Heart right ventricle (tissue), 16 donors: ENCODE measurements at regions of chr11 and their contacts with region 1.

Region 1: GRCh38 chr11:68206187-68206601 is 6.9 kb downstream of the KMT5B start:
- DNase-seq: no peak
- ATAC-seq: peak in 3 of 8 donors; percentile 32 to 57 (median 47)
- H3K4me3 ChIP-seq: no peak overlapping the region
- H3K27ac ChIP-seq: no peak overlapping the region
- H3K4me1 ChIP-seq: peaks cover 6 to 89% (median 72%) of the 10 kb centered on the region in 9 donors
- H3K27me3 ChIP-seq: no peaks in the 10 kb centered on the region
- CTCF ChIP-seq: peak; percentile 54 to 88 (median 78)

Region 2: DNA sequence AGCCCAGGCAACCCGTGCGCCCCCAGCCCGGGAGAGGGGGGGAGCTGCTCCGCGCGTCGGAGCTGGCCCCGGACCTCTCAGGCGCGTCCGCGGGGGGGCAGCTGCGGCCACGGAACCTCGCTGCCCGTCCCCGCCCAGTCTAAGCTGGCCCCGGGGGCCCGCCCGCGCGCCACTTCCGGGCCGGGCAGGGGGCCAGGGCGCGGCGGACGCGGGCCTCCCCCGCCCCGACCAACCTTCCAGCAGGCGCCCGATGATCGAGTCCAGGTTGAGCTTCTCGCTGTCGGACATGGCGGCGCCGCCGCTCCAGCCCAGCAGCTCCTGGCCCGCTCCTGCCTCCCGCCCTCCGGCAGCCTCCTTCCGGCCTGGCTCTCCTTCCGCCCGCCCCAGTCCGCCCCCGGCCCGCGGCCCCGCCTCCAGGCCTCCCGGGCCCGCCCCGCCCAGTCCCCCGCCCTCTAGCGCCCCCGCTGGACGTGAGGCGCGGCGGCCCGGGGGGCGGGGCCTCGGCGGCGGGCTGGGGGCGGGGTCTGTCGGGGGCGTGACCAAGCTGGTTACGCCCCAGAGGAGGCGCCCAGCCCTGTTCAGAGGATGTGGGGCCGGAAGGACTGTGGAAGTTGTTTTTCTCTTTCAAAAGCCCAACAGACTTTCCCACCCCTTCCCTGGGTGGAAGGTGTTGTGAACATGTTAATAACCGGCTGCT is 804.6 kb before region 1 on chr11 and contains the start of gene PPP1CA:
- intact Hi-C with region 1: no loop called
- DNase-seq: peak; percentile 90 to 94
- ATAC-seq: peak; percentile 76 to 95 (median 86)
- H3K4me3 ChIP-seq: peak within 1 kb of the TSS; percentile 68 to 99 (median 96)
- H3K27ac ChIP-seq: peak within 1 kb of the TSS; percentile 89 to 99 (median 97)
- H3K4me1 ChIP-seq: peaks cover 0 to 89% (median 54%) of the 10 kb centered on the region in 9 donors
- H3K27me3 ChIP-seq: no peaks in the 10 kb centered on the region
- CTCF ChIP-seq: peak; percentile 38 to 91 (median 62)
- total RNA-seq, gene PPP1CA: 92.0 to 143 (median 103) TPM

Region 3: DNA sequence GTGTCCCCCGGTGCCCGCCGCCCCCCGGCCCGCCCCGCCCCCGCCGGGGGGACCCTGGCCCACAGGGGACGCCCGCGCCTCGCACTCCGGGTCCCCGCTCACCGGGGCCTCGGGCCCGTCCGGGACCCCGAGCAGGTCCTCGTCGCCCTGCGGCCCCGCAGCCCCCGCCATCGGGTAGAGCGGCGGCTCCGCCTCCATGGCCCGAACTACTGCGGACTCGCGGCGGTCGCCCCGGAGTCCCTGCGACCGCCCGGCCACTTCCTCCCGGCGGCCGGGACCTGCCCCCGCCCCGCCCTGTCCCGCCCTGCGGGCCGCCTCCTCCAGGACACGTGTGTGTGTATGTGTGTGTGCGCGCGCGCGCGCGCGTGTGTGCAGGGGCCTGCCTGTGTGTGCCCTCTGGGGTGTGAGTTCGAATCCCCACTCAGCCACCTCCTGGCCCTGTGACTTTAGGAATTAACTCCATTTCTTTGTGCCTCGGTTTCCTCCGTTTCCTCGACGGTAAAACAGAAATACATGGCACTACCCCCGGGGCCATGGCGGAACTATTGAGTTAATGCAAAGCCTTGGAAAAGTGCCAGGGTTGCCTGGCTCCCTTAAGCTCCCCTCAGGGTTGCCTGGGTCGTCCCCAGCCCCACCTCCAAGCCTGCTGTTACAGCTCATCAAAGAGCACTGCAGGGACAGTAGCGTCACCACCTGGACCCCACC is 202.2 kb before region 1 on chr11 and contains the start of gene UNC93B1:
- intact Hi-C with region 1: loop called in 2 of 10 experiments (anchors 10 kb)
- DNase-seq: peak; percentile 90 to 93
- ATAC-seq: peak; percentile 86 to 95 (median 92)
- H3K4me3 ChIP-seq: peak within 1 kb of the TSS; percentile 56 to 82 (median 72)
- H3K27ac ChIP-seq: peak within 1 kb of the TSS in 9 of 10 donors; percentile 51 to 91 (median 79)
- H3K4me1 ChIP-seq: peaks cover 0 to 29% (median 14%) of the 10 kb centered on the region in 9 donors
- H3K27me3 ChIP-seq: no peaks in the 10 kb centered on the region
- CTCF ChIP-seq: no peak
- total RNA-seq, gene UNC93B1: 3.2 to 18.2 (median 6.2) TPM

Region 4: GRCh38 chr11:68010090-68011041 is 195.8 kb before region 1 on chr11 and contains the start of gene ALDH3B1:
- intact Hi-C with region 1: loop called in 3 of 10 experiments (anchors 10 kb)
- DNase-seq: peak; percentile 82 to 90
- ATAC-seq: peak; percentile 79 to 88 (median 85)
- H3K4me3 ChIP-seq: peak within 1 kb of the TSS in 9 of 10 donors; percentile 24 to 55 (median 39)
- H3K27ac ChIP-seq: peak within 1 kb of the TSS; percentile 69 to 95 (median 81)
- H3K4me1 ChIP-seq: peaks cover 10 to 66% (median 20%) of the 10 kb centered on the region in 9 donors
- H3K27me3 ChIP-seq: no peaks in the 10 kb centered on the region
- CTCF ChIP-seq: no peak
- total RNA-seq, gene ALDH3B1: 3.5 to 11.0 (median 4.3) TPM

Region 5: DNA sequence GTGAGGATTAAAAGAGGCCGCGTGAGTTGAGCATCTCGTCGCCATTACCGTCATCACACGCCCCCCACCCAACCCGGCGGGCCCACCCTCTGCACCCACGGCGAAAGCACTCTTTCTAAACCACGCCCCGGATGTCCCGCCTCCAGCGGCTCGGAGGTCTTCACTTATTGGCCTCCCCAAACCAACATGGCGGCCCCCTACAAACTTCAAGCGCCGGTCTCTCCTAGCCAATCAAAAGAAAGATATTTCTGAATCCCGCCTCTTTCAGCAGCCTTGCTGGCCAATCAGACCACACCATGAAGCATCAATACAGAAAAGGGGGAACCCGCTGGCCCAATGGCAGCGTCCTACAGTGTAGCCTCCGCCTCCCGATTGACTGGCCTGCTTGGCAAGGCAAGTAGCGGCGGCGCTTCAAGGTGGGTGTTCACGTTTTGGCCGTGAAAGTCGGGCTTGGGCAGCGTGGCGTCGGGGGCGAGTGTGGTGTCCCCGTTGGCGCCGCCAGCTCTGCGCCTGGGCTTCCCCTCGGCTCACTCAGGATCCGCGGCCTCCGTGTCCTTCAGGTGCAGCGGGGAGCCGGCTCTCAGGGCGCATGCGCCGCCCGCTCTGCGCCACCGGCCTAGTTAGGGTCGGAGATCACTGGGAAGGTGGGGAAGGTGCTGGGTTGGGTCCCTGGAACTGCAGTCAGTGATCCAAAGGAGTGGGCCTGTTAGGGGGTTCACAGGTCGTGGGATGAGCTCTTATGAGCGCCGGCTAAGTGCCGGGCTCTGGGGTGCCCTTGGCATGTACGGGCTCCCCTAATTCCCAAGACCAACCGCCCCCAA is 175.7 kb before region 1 on chr11 and contains the start of gene NDUFS8:
- intact Hi-C with region 1: loop called in 3 of 10 experiments (anchors 5 to 10 kb)
- DNase-seq: peak; percentile 96 to 97
- ATAC-seq: peak; percentile 86 to 97 (median 94)
- H3K4me3 ChIP-seq: peak within 1 kb of the TSS; percentile 54 to 96 (median 79)
- H3K27ac ChIP-seq: peak within 1 kb of the TSS; percentile 64 to 97 (median 92)
- H3K4me1 ChIP-seq: peaks cover 17 to 48% (median 34%) of the 10 kb centered on the region in 9 donors
- H3K27me3 ChIP-seq: no peaks in the 10 kb centered on the region
- CTCF ChIP-seq: no peak
- total RNA-seq, gene NDUFS8: 330 to 492 (median 421) TPM

Region 6: GRCh38 chr11:68051191-68052144 is 154.7 kb before region 1 on chr11:
- intact Hi-C with region 1: no loop called
- DNase-seq: no peak
- ATAC-seq: peak in 4 of 8 donors; percentile 12 to 39 (median 17)
- H3K4me3 ChIP-seq: no peak overlapping the region
- H3K27ac ChIP-seq: no peak overlapping the region
- H3K4me1 ChIP-seq: peaks cover 0 to 6% (median 0%) of the 10 kb centered on the region in 9 donors
- H3K27me3 ChIP-seq: no peaks in the 10 kb centered on the region
- CTCF ChIP-seq: no peak

Region 7: DNA sequence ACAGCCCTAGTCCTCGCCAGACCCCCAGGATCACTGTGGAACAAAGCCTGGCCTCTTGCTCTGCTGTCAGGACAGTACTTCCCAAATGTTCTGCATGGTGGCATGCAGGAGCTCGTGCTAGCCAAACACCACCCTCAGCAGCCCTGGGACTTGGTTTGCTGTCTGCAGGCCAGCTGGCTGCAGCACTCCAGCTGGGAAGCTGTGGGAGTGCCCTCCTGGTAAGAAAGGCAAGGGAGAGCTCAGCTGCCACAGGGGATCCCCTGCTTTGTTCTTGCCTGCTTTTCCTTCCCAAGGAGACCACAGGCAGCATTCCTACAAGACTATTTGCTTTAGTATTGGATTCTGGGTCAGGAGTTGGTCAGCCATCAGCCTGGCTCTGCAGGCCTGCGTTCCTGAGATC is 139.5 kb before region 1 on chr11:
- intact Hi-C with region 1: loop called in 3 of 10 experiments (anchors 10 kb)
- DNase-seq: no peak
- ATAC-seq: peak in 7 of 8 donors; percentile 35 to 90 (median 55)
- H3K4me3 ChIP-seq: no peak overlapping the region
- H3K27ac ChIP-seq: no peak overlapping the region
- H3K4me1 ChIP-seq: peaks cover 0 to 15% (median 4%) of the 10 kb centered on the region in 9 donors
- H3K27me3 ChIP-seq: no peaks in the 10 kb centered on the region
- CTCF ChIP-seq: no peak

Region 8: GRCh38 chr11:68076371-68077042 is 129.7 kb before region 1 on chr11:
- intact Hi-C with region 1: loop called in 3 of 10 experiments (anchors 5 to 10 kb)
- DNase-seq: no peak
- ATAC-seq: no peak
- H3K4me3 ChIP-seq: no peak overlapping the region
- H3K27ac ChIP-seq: no peak overlapping the region
- H3K4me1 ChIP-seq: peaks cover 0 to 11% (median 0%) of the 10 kb centered on the region in 9 donors
- H3K27me3 ChIP-seq: no peaks in the 10 kb centered on the region
- CTCF ChIP-seq: peak in 7 of 9 donors; percentile 5 to 32 (median 16)

Region 9: DNA sequence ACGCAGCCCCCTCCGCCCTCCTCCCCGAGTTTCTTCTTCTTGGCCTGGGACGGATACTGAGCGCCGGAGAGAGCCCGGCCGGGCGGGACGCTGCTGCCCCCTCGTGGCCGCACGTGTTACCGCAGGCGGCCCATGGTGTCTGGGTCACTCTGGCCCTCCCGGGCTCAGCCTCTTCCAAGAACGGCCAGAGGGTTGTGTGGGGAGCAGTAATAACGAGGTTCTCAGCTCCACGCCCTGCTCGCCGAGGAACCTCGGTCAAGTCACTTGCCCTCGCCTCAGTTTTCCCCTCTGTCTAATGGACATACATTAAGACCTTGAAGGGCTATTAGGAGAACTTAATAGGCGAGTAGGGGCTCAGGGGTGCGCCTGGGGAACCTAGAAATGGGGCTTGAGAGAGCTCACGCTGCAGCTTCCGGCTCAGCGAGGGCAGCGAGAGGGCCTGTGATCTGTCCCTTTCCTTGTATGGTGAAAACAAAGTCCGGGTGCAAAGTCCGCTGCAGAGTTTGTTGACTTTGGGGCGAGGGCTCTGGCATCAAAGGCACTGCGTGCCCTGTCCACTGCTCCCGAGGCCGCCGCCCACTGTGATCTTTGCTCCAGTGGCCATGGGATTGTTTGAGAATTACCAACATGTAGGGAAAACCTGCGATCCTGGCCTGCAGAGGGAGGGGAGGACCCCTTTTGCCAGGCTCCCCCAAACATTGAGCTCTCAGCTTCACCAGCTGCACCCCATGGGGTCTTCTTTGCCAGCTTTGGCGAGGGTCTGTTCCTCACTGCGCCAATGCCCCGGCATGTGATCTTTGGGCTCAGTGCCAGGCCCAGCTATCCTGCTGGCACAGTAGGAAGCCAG is 91.8 kb after region 1 on chr11:
- intact Hi-C with region 1: loop called in 1 of 10 experiments (anchors 5 kb)
- DNase-seq: peak; percentile 75 to 83
- ATAC-seq: peak; percentile 95 to 98 (median 97)
- H3K4me3 ChIP-seq: peak overlapping the region in 4 of 10 donors; percentile 9 to 23 (median 20)
- H3K27ac ChIP-seq: peak overlapping the region in 1 of 10 donors; percentile 5
- H3K4me1 ChIP-seq: peaks cover 6 to 28% (median 17%) of the 10 kb centered on the region in 9 donors
- H3K27me3 ChIP-seq: no peaks in the 10 kb centered on the region
- CTCF ChIP-seq: peak; percentile 97 to 99 (median 98)

Region 10: GRCh38 chr11:68369756-68370155 is 163.6 kb after region 1 on chr11:
- intact Hi-C with region 1: no loop called
- DNase-seq: no peak
- ATAC-seq: no peak
- H3K4me3 ChIP-seq: no peak overlapping the region
- H3K27ac ChIP-seq: peak overlapping the region; percentile 78 to 94 (median 84)
- H3K4me1 ChIP-seq: peaks cover 37 to 56% (median 52%) of the 10 kb centered on the region in 9 donors
- H3K27me3 ChIP-seq: peaks cover 0 to 3% (median 0%) of the 10 kb centered on the region in 7 donors
- CTCF ChIP-seq: no peak